HEK293 (cell line): ENCODE measurements at regions of chr11 and their contacts with region 1.

Region 1: GRCh38 chr11:113532697-113533424 is 57.7 kb upstream of the DRD2 start:
- H3K4me3 ChIP-seq: no peak overlapping the region
- H3K27ac ChIP-seq: no peak overlapping the region
- H3K4me1 ChIP-seq: no peaks in the 10 kb centered on the region
- CTCF ChIP-seq: peak; percentile 40; the same call in 1 of the 2 replicates

Region 2: GRCh38 chr11:113305440-113306336 is 227.2 kb before region 1 on chr11:
- CTCF ChIA-PET with region 1: interaction called, 18 read pairs
- POLR2A ChIA-PET with region 1: no interaction called
- H3K4me3 ChIP-seq: no peak overlapping the region
- H3K27ac ChIP-seq: no peak overlapping the region
- H3K4me1 ChIP-seq: no peaks in the 10 kb centered on the region
- CTCF ChIP-seq: peak; percentile 82

Region 3: GRCh38 chr11:113314389-113315301 is 218.2 kb before region 1 on chr11 and contains the start of gene TTC12:
- CTCF ChIA-PET with region 1: interaction called, 14 read pairs
- POLR2A ChIA-PET with region 1: no interaction called
- H3K4me3 ChIP-seq: peak within 1 kb of the TSS; percentile 92
- H3K27ac ChIP-seq: peak within 1 kb of the TSS; percentile 48; the same call in 1 of the 2 replicates
- H3K4me1 ChIP-seq: no peaks in the 10 kb centered on the region; the same call in 1 of the 2 replicates
- CTCF ChIP-seq: no peak

Region 4: GRCh38 chr11:113519989-113520613 is 12.8 kb before region 1 on chr11:
- CTCF ChIA-PET with region 1: interaction called, 17 read pairs
- POLR2A ChIA-PET with region 1: no interaction called
- H3K4me3 ChIP-seq: no peak overlapping the region
- H3K27ac ChIP-seq: no peak overlapping the region
- H3K4me1 ChIP-seq: no peaks in the 10 kb centered on the region
- CTCF ChIP-seq: no peak

Region 5: DNA sequence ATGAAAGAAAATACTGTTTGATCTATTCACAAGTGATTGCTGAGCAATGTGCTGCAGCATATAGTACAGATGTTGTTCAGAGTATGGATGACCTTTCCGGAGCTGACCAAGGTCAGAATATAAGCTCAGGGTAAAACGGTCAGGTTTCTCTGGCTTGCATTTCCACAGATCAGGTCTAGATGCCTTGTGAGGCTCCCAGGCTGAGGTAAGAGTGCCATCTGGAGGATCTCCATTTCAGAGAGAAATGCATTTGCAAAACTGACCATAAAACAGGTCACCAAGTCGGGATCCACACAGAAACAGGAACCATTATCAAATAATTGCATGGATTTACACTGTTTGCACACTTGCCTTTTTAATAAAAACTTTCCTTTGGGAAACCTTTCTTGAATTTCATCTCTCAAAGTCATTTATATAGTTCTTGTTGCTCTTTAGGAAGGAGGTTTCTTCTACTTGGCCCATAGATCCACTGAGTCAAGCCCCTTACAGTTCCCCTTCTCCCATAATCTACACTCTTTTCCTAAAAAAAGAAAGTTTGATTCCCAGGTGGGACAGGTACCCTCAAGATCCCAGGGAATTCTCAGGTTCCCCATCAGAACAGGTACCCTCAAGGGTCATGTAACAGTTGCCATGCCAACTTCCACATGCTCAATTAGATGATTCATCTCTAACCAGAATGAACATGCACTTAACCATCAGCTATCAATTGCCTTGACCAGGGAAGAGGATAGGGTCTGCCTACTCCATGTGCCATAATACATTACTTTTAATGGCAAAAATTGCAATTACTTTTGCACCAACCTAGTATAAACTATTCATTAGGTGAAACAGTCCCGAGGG is 198.2 kb after region 1 on chr11:
- CTCF ChIA-PET with region 1: interaction called, 24 read pairs
- POLR2A ChIA-PET with region 1: no interaction called
- H3K4me3 ChIP-seq: no peak overlapping the region
- H3K27ac ChIP-seq: no peak overlapping the region
- H3K4me1 ChIP-seq: no peaks in the 10 kb centered on the region
- CTCF ChIP-seq: peak; percentile 72